ENCODE measurements at regions of chr14 and their contacts with region 1.

Region 1: DNA sequence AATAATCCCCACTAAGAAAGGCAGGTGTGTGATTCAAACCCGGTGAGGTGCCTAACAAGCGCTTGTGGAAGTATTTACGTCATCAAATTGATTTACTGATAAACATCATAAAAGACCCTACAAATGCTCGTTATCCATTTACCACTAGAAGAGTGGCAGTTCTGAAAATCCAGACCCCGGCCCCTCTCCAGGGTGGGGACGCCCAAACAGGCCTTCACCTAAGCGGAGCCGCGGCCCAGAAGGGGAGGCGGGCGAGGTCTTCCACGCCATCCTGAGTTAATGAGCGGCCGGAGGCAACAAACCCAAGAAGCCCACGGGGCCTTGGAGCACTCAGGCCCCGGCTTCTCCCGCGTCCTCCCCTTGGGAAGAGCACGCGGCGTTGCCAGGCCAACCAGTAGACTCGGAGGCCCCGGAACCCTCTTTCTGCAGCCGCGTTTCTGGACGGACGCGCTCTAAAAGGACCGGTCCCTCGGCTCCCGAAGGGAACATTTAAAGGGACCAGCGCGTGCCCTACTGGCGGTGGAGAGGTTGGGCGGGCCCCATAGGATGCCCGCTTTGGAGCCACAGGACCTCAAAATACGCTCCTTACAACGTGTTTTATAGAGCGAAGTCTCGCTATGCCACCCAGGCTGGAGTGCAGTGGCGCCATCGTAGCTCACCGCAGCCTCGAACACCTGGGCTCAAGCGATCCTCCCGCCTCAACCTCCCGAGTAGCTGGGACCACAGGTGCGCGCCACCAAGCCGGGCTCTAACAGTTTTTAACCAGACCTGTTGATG is 3.5 kb downstream of the PTPN21 start:
- DNase-seq: peak; percentile 82 to 86
- ATAC-seq: peak; percentile 69

Region 2: GRCh38 chr14:88492272-88493089 is 58.8 kb before region 1 on chr14:
- intact Hi-C with region 1: loop called in 1 of 2 experiments (anchors 5 kb)
- DNase-seq: peak; percentile 58 to 66
- ATAC-seq: peak; percentile 92

Region 3: DNA sequence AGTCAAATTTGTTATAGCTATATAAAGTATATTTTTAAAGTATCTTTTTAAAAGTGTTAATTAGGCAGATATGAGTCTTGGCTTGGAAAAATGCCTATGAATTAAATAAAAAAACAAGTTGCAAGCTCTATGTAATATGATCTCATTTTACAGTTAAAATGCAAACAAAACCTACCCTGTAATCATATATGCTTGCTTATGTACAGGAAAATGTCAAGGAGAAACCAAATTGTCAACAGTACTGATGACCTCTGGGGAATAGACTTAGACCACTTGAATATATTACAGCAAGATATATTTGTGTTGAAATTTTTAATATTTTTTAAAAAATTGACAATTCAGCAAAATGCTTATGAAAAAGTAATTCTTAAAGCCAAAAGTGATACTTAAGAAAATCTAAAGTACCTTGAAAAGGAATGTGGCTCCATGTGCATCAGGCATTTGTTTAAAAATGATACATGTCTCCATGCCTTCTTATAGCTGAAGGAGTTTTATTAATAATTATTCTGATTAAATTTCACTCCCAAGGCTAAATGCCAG is 45.7 kb before region 1 on chr14:
- intact Hi-C with region 1: no loop called
- DNase-seq: no peak
- ATAC-seq: no peak